Endothelial cell of umbilical vein (primary cell): ENCODE measurements at regions of chr21 and their contacts with region 1.

Region 1: DNA sequence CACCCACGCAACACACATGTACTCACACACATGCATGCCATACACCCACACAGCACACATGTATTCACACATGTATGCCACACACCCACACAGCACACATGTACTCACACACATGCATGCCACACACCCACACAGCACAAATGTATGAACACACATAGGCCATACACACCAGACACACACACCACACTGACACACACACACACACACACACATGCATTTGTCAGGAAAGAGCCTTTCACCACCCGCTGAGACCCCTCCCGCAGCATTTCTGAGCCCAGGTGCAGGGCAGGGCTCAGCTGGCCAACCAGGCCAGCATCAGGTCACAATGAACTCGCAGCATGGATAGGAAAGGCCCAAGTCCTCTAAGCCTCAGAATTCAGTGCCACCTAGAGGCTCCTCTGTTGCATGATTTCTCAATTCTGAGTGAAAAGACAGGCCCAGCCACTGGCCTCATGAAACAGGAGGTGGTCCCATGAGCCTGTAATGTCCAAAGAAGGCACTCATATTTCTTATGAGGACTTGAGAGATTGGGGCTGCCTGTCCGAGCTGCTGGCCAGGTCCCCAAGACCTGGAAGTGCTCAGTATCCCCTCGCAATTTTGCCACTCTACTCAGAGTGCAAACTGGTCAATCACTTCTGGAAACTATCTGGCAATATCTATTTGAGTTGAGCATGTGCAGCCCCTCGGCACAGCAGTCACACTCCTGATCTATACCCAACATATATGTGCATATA is 57.3 kb downstream of the PSMG1 start:
- DNase-seq: peak; percentile 68
- H3K4me3 ChIP-seq: no peak overlapping the region
- H3K27ac ChIP-seq: no peak overlapping the region
- H3K4me1 ChIP-seq: no peaks in the 10 kb centered on the region
- H3K27me3 ChIP-seq: peaks cover 0 to 2% of the 10 kb centered on the region in 2 experiments
- CTCF ChIP-seq: peak; percentile 51 to 73
- POLR2A ChIP-seq: no peak

Region 2: GRCh38 chr21:39137248-39138178 is 11.6 kb after region 1 on chr21:
- CTCF ChIA-PET with region 1: interaction called, 17 read pairs
- POLR2A ChIA-PET with region 1: no interaction called
- dilution Hi-C with region 1: no loop called
- intact Hi-C with region 1: no loop called
- DNase-seq: no peak
- H3K4me3 ChIP-seq: no peak overlapping the region
- H3K27ac ChIP-seq: no peak overlapping the region
- H3K4me1 ChIP-seq: no peaks in the 10 kb centered on the region
- H3K27me3 ChIP-seq: no peaks in the 10 kb centered on the region
- CTCF ChIP-seq: no peak
- POLR2A ChIP-seq: no peak